ENCODE measurements at regions of chr15 and their contacts with region 1.

Region 1: GRCh38 chr15:62742409-62743171 is 300.0 kb upstream of the TPM1 start:
- DNase-seq: peak; percentile 36
- ATAC-seq: peak; percentile 80
- H3K4me3 Mint-ChIP-seq: no peak overlapping the region
- H3K27ac Mint-ChIP-seq: no peak overlapping the region
- H3K4me1 Mint-ChIP-seq: peaks cover 9% of the 10 kb centered on the region
- H3K27me3 Mint-ChIP-seq: no peaks in the 10 kb centered on the region; the same call in 1 of the 2 replicates
- CTCF ChIP-seq: peak; percentile 68

Region 2: DNA sequence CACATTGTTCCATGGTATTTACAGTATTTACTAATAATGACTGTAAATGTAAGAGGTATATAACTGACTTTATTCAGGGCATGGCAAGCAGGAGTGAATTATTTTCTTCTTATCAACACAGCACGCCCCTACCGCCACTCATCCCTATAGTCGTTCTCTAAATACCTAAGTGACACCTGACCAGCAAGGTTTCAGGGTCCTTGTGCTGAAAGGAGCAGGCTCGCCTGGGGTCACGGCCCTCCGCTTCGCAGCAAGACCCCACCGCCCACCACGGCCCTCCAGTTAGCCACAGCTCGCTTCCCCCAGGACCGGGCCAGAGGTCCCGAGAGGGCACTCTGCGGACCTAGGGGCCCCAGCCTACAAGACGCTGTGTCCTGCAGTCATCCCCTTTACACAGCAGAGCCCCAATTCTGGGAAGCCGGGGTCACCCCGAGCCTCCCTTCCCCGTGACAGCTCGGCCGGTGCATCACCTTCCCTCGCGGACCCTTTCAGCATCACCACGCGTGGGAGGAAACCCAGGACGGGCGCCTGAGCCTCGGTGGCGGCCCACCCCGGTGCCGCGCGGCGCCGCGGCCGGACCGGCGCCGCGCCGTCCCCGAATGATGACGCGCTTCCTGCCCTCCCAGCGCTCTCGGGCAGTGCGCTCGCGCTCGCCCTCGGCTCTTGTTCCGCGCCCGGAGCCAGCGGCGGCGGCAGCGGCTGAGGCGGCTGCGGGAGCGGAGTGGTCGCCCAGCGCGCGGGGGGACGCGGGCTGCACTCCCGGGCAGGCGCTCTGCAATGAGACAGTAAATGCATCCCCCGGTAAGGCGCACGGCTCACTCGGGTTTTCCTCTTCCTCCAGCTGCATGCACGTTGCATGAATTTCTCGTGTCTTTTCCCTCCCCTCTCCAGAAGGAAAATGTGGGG is 352.5 kb before region 1 on chr15:
- CTCF ChIA-PET with region 1: interaction called, 16 read pairs
- POLR2A ChIA-PET with region 1: no interaction called
- DNase-seq: peak; percentile 65
- ATAC-seq: peak; percentile 72
- H3K4me3 Mint-ChIP-seq: peak within 1 kb of the TSS; percentile 95
- H3K27ac Mint-ChIP-seq: peak within 1 kb of the TSS; percentile 90
- H3K4me1 Mint-ChIP-seq: peaks cover 22% of the 10 kb centered on the region
- H3K27me3 Mint-ChIP-seq: peaks cover 12% of the 10 kb centered on the region
- CTCF ChIP-seq: no peak

Region 3: DNA sequence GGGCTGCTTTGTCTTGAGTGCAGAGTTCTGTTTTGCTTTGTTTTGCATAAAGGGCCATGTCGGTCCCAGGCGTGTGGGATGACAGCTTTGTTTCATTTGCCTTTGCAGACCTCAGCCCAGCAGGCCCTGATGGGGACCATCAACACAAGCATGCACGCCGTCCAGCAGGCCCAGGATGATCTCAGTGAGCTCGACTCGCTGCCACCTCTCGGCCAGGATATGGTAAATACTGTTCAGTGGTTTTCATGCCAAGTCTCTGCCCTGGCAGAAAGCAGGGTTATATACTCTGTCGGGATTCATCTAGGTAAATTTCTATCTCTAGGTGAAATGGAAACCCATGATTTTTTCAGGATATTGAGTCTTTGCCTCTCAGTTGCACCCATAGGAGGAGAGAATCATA is 43.9 kb before region 1 on chr15:
- CTCF ChIA-PET with region 1: interaction called, 10 read pairs
- POLR2A ChIA-PET with region 1: no interaction called
- DNase-seq: no peak
- ATAC-seq: peak; percentile 16; the same call in 1 of the 2 replicates
- H3K4me3 Mint-ChIP-seq: no peak overlapping the region
- H3K27ac Mint-ChIP-seq: no peak overlapping the region
- H3K4me1 Mint-ChIP-seq: 0 out of 2 replicates have a peak, but pooled peaks cover 3% of the 10 kb centered on the region
- H3K27me3 Mint-ChIP-seq: no peaks in the 10 kb centered on the region; the same call in 1 of the 2 replicates
- CTCF ChIP-seq: no peak

Region 4: GRCh38 chr15:62758126-62758951 is 15.7 kb after region 1 on chr15:
- CTCF ChIA-PET with region 1: interaction called, 37 read pairs
- POLR2A ChIA-PET with region 1: interaction called, 4 read pairs
- DNase-seq: no peak
- ATAC-seq: peak; percentile 84
- H3K4me3 Mint-ChIP-seq: no peak overlapping the region
- H3K27ac Mint-ChIP-seq: peak overlapping the region; percentile 89
- H3K4me1 Mint-ChIP-seq: peaks cover 47% of the 10 kb centered on the region
- H3K27me3 Mint-ChIP-seq: no peaks in the 10 kb centered on the region
- CTCF ChIP-seq: no peak